ENCODE measurements at regions of chr10 and their contacts with region 1.

Region 1: DNA sequence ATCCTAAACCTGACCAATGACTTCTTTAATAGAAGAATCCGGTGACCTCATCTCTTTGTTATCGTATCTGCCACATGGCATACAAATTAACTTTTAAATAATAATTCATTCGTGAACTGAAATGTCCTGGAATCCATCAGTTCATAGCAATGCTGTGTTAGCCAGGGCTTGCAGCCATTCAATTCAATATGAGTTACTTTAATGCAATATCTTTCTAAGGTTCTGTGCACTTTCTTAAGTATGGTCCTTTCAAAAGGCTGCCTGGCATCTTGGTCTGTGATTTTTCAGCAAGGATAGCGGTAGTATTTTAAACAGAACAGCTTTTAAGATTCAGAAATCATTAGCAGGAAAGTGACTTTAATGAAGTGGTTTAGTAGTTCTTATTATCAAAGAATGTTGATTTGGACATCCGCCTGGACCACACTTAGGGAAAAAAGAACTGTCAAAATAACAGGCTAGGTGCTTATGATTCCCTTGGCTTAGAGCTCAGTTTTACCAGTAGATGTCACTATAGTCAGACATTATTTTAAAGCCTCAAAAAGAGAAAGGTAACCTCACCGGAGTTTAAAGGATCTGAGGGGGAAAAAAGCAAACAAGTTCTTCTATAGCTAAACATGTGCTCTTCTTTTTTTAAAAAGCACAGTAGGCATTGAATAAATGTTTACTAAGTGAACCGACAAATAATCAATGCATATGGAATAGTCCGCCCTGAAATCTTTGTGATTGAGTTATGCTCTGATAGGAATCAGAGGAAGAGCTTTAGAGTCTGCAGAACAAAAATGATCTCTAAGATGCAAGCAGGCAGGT is 22.7 kb downstream of the SLC35G1 start:
- DNase-seq: peak; percentile 8
- H3K4me3 ChIP-seq: no peak overlapping the region
- H3K27ac ChIP-seq: no peak overlapping the region
- H3K27me3 ChIP-seq: no peaks in the 10 kb centered on the region
- CTCF ChIP-seq: peak; percentile 68

Region 2: DNA sequence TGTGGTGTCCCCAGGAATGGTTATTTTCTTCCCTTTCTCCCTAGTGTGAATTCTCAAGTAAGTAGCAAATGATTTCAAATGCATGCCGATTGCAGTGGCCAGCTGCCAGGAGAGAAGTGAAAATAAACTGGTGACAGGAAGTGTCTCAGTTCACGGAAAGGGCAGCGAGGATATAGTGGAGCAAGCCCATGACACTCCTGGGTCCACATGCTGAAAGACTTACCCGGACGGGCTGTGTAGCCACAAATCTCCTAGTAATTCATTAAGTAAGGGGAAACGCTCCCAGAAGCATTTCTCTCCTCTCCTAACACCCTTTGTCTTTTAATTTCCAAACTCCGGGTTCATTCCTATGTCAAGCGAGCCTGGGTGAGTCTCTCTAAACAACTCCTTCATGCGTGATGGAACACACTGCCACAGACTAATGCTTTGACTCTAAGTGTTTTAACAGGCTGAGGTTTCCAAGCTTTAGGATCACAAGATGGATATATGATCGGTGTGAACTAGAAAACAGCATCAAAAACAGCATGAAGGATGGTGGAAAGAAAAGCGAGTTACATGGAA is 717.2 kb before region 1 on chr10:
- CTCF ChIA-PET with region 1: no interaction called
- POLR2A ChIA-PET with region 1: no interaction called
- DNase-seq: no peak
- H3K4me3 ChIP-seq: peak overlapping the region; percentile 49
- H3K27ac ChIP-seq: no peak overlapping the region
- H3K27me3 ChIP-seq: peaks cover 6% of the 10 kb centered on the region
- CTCF ChIP-seq: no peak

Region 3: DNA sequence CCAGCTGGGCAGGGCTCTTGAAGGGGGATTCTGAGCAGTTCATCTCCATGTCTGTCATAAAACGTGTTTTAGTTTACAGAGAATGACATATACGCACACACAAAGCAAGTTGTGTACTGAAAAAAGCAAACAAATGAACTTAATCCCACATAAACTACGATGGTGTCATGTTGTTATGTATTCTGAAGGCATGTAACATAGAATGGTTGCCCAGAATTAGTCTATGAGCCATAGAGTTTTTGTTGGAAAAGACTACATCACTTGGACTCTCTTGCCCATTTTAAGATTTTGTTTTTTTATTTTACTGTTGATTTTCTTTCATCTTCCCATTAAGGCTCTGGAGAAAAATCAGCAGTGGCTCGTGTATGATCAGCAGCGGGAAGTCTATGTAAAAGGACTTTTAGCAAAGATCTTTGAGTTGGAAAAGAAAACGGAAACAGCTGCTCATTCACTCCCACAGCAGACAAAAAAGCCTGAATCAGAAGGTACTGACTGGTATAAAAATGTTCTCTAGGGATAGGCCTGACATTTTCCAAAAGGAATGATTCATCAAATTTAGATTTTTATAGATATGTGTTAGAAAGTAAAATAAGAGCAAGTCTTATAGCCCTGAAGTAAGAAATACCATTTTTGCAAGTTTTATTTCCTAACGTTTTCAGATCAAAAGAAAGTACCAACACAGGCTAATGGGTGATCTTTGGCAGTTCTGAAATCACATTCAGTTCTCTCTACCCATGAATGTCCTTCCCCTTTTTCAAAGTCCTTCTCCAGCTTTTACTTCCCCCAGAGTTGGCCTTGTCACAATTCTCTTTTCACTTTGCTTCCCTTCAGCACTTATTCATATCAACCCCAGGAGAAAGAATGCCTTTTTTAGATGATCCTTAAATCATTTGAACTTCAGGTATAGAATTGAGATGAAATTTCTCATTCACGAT is 401.1 kb before region 1 on chr10:
- CTCF ChIA-PET with region 1: no interaction called
- POLR2A ChIA-PET with region 1: no interaction called
- DNase-seq: no peak
- H3K4me3 ChIP-seq: no peak overlapping the region
- H3K27ac ChIP-seq: no peak overlapping the region
- H3K27me3 ChIP-seq: no peaks in the 10 kb centered on the region
- CTCF ChIP-seq: no peak

Region 4: DNA sequence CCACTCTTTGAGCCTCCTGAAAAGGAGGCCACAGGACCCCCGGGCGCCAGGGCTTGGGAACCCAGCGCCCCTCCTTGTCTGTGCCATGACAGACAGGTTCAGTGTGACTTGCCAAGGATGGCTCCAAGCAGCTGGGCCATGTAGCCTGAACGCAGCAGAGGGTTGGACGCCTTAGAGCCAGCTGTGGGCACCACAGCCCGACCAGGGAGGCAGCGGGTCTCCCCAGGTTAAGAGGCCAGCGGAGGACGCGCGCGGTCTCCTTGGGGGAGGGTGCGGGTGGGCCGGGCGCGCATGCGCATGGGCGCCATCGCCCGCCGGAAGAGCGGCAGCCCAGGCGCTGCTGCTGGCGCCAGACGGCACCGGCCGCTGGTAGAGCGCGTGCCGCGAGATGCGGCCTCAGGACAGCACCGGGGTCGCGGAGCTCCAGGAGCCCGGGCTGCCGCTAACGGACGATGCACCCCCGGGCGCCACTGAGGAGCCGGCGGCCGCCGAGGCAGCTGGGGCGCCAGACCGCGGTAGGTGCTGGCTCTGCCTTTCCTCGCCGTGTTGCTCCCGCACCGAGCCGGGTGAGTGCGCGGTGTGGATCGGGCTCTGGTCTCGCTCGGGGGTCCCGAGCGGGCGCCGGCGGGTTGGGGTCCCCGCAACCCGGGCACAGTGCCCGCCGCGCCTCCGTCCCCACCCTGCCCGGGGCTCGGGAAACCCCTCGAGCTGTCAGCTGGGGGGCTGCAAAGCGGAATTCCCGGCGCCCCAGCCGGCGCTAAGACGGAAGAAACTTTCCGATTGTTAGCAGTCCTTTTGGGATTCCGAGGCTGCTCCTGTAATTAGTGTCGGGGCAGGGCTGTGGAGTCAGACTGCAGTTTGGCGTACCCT is 22.6 kb before region 1 on chr10 and contains the start of gene SLC35G1:
- CTCF ChIA-PET with region 1: interaction called, 18 read pairs
- POLR2A ChIA-PET with region 1: no interaction called
- DNase-seq: no peak
- H3K4me3 ChIP-seq: peak within 1 kb of the TSS; percentile 80
- H3K27ac ChIP-seq: no peak within 1 kb of the TSS
- H3K27me3 ChIP-seq: peaks cover 6% of the 10 kb centered on the region
- CTCF ChIP-seq: no peak
- polyA plus RNA-seq, gene SLC35G1: 6.7 and 7.0 TPM in 2 replicates

Region 5: DNA sequence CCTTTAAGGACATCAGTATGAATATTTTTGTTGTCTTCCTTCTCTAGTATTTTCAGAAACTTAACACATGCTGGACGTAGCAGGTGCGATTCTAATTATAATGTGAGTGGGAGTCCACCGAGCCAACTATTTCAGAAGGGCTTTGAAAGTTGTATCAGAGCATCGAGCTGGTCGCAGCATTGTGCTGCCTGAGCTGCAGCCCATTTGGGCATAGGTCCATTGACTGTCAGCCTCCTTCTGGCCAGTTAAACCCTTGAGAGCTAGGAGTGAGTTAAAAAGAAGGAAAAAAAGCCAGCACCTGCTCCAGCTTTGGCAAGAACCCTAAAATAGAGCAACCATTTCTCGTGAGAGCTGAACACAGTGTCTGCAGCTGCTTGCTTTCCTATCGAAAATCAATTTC is 25.1 kb after region 1 on chr10:
- CTCF ChIA-PET with region 1: no interaction called
- POLR2A ChIA-PET with region 1: no interaction called
- DNase-seq: no peak
- H3K4me3 ChIP-seq: no peak overlapping the region
- H3K27ac ChIP-seq: no peak overlapping the region
- H3K27me3 ChIP-seq: no peaks in the 10 kb centered on the region
- CTCF ChIP-seq: no peak

Region 6: GRCh38 chr10:93977442-93977841 is 61.0 kb after region 1 on chr10:
- CTCF ChIA-PET with region 1: interaction called, 15 read pairs
- POLR2A ChIA-PET with region 1: no interaction called
- DNase-seq: no peak
- H3K4me3 ChIP-seq: no peak overlapping the region
- H3K27ac ChIP-seq: no peak overlapping the region
- H3K27me3 ChIP-seq: peaks cover 9% of the 10 kb centered on the region
- CTCF ChIP-seq: no peak

Region 7: GRCh38 chr10:94076321-94076841 is 159.9 kb after region 1 on chr10:
- CTCF ChIA-PET with region 1: interaction called, 24 read pairs
- POLR2A ChIA-PET with region 1: no interaction called
- DNase-seq: peak; percentile 30
- H3K4me3 ChIP-seq: no peak overlapping the region
- H3K27ac ChIP-seq: no peak overlapping the region
- H3K27me3 ChIP-seq: no peaks in the 10 kb centered on the region
- CTCF ChIP-seq: peak; percentile 76

Region 8: DNA sequence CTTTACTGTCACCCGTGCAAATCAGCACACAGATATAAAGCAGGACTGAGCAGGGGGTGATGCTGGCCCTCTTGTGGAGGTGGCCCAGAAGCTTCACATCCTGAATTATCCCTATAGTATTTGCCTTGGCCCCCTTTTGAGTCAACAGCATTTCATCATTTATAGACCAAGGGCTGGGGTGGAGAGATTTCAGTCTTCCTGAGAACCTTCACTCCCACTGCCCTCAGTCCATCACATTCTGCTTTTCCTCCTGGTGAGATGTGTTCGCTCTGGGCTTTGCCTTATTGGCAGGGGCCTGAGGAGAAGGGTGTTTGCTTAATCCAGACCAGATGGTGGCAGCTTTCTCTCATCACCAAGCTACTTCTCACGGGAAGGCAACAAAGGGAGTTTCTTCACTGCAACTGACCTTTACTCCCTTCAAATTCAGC is 398.6 kb after region 1 on chr10:
- CTCF ChIA-PET with region 1: interaction called, 215 read pairs
- POLR2A ChIA-PET with region 1: no interaction called
- DNase-seq: no peak
- H3K4me3 ChIP-seq: no peak overlapping the region
- H3K27ac ChIP-seq: no peak overlapping the region
- H3K27me3 ChIP-seq: no peaks in the 10 kb centered on the region
- CTCF ChIP-seq: 0 out of 2 replicates have a peak, but pooled peaks have one; percentile 22

Region 9: GRCh38 chr10:94334857-94335256 is 418.4 kb after region 1 on chr10:
- CTCF ChIA-PET with region 1: interaction called, 19 read pairs
- POLR2A ChIA-PET with region 1: no interaction called
- DNase-seq: no peak
- H3K4me3 ChIP-seq: no peak overlapping the region
- H3K27ac ChIP-seq: no peak overlapping the region
- H3K27me3 ChIP-seq: no peaks in the 10 kb centered on the region
- CTCF ChIP-seq: no peak